Left cardiac atrium (tissue), 4 donors: ENCODE measurements at regions of chr10 and their contacts with region 1.

Region 1: DNA sequence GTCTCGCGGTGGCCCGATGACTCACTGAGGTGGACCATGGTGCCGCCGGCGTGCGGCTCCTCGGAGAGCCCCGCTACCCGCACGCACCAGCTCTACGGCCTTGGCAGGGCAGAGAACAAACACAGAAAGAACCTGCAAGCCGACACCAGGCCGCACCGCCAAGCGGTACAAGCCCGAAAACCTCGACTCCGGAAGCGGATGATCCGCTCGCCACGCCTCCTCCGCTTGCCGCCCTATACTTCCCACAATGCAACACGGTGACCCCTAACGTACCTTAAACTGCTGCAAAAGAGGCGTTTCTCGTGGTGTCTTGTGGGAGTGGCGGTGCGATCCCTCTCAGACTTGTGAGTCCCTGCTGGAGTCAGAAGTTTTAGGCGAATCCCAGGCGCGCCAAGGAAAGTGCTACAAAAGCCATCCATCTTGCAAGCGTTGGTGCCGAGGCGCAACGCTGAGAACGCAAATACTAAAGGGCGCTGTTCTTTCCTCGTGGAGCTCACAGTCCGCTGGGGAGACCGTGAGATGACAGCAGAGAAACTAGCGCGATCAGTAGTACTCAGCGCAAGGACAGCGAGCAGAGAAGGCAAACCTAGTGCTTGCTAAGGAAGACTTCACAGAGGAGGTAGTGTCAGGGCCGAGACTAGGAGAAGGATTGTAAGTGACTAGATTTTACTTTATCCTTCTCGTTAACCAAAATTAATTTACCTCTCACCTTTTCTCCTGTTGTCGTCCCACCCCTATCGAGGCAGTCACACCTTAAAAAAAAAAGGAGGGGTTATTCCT is at the start of gene MRPS16:
- DNase-seq: peak; percentile 95
- ATAC-seq: peak; percentile 99 to 100
- total RNA-seq, gene MRPS16: 78.8 to 82.1 TPM

Region 2: DNA sequence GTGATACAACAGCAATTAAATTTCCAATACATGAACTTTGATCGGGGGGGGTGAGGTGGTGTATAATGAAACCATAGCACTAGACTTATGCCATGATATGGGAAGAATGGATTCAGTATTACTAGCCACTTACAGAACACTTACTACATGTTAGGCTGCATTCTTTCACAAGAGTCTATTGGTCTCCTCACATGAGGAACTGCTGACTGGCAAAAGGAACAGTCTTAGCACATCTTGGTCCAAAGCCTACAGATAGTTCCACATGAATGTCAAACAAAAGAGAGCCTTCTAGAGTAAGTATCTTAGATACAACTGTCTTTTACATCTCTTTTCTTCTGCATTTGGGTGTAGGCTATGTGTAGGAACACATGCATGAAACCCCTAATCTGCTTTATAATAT is 782.0 kb before region 1 on chr10:
- intact Hi-C with region 1: no loop called
- DNase-seq: no peak
- ATAC-seq: no peak

Region 3: GRCh38 chr10:73044378-73045285 is 208.0 kb before region 1 on chr10:
- intact Hi-C with region 1: no loop called
- DNase-seq: no peak
- ATAC-seq: peak; percentile 53 to 91

Region 4: GRCh38 chr10:73239908-73240307 is 12.7 kb before region 1 on chr10:
- intact Hi-C with region 1: loop called in 1 of 2 experiments (anchors 2 kb)
- DNase-seq: no peak
- ATAC-seq: no peak